Sigmoid colon (tissue), 7 donors: ENCODE measurements at regions of chrX and their contacts with region 1.

Region 1: GRCh38 chrX:80578517-80579105 is 158.4 kb downstream of the TENT5D start:
- DNase-seq: no peak
- H3K4me3 ChIP-seq: no peak overlapping the region
- H3K27ac ChIP-seq: no peak overlapping the region
- H3K4me1 ChIP-seq: no peaks in the 10 kb centered on the region
- H3K27me3 ChIP-seq: no peaks in the 10 kb centered on the region
- CTCF ChIP-seq: peak in 3 of 4 experiments; percentile 12 to 47 (median 39)
- EP300 ChIP-seq: no peak
- POLR2A ChIP-seq: no peak

Region 2: GRCh38 chrX:80282535-80282934 is 296.1 kb before region 1 on chrX:
- intact Hi-C with region 1: loop called (anchors 5 kb)
- DNase-seq: no peak
- H3K4me3 ChIP-seq: no peak overlapping the region
- H3K27ac ChIP-seq: no peak overlapping the region
- H3K4me1 ChIP-seq: no peaks in the 10 kb centered on the region
- H3K27me3 ChIP-seq: peaks cover 0 to 4% (median 0%) of the 10 kb centered on the region in 3 donors
- CTCF ChIP-seq: peak in 1 of 4 experiments; percentile 21
- EP300 ChIP-seq: no peak
- POLR2A ChIP-seq: no peak